AG04450 (cell line): ENCODE measurements at regions of chr5 and their contacts with region 1.

Region 1: DNA sequence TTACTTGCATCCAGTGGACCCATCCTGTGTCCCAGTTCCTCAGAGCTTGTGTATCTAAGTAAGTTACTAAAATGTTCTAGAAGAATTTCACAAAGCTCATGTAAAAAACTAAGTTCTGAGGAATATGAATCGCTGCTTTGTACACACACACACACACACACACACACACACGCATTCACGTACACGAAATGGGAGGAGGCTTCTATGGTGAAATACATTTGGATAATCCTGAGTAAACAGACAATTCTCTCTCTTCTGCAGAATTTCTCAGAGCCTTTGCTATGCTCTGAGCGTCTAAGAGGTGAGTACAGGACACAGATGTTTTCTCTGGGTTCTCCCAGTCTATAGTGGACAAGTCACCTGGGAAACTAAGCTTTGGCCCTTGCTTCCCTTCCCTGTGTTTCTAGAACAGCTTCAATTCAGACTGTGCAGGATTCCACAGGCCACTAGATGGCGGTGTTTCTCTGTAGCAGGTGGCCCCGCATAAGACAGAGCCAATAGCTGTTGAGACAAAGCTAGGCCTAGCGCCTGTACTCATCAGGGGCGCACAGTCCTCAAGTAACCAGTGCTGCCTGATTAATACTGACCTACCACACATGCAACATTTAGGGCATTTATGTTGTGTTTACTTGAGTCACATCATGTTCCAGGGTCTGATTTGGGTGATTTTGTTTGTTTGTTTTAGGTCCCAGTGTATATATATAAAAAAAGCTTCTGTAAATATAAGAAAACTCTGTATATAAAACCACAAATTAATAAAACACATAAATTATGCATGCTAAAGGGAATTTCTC is 114.8 kb downstream of the LIFR start:
- DNase-seq: peak; percentile 82
- H3K4me3 ChIP-seq: no peak overlapping the region
- H3K27ac ChIP-seq: no peak overlapping the region
- H3K27me3 ChIP-seq: peaks cover 2% of the 10 kb centered on the region
- CTCF ChIP-seq: peak; percentile 99

Region 2: GRCh38 chr5:38307845-38308244 is 133.8 kb before region 1 on chr5:
- CTCF ChIA-PET with region 1: no interaction called
- POLR2A ChIA-PET with region 1: no interaction called
- DNase-seq: no peak
- H3K4me3 ChIP-seq: no peak overlapping the region
- H3K27ac ChIP-seq: no peak overlapping the region
- H3K27me3 ChIP-seq: no peaks in the 10 kb centered on the region
- CTCF ChIP-seq: no peak

Region 3: GRCh38 chr5:38420691-38421390 is 20.8 kb before region 1 on chr5:
- CTCF ChIA-PET with region 1: interaction called, 55 read pairs
- POLR2A ChIA-PET with region 1: no interaction called
- DNase-seq: peak; percentile 29
- H3K4me3 ChIP-seq: no peak overlapping the region
- H3K27ac ChIP-seq: no peak overlapping the region
- H3K27me3 ChIP-seq: peaks cover 2% of the 10 kb centered on the region
- CTCF ChIP-seq: peak; percentile 86

Region 4: DNA sequence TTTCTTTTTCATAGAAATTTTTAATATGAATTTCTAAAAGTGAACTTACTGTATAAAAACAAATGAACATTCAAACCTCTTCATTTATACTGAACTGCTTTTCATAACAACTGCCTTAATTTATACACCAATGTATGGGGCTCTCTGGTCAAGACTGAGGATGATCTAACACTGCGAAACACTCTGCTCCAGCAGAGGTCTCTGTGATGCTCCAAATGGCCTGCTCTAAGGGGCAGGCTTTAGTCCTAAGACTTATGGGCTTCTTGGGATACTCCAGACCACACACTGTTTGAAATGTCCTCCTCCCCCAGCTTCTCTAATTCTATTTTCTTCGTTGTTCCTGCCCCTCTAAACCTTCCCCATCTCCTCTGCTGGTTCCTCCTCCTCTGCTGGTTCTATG is 56.3 kb after region 1 on chr5:
- CTCF ChIA-PET with region 1: interaction called, 14 read pairs
- POLR2A ChIA-PET with region 1: no interaction called
- DNase-seq: no peak
- H3K4me3 ChIP-seq: no peak overlapping the region
- H3K27ac ChIP-seq: no peak overlapping the region
- H3K27me3 ChIP-seq: no peaks in the 10 kb centered on the region
- CTCF ChIP-seq: 0 out of 2 replicates have a peak, but pooled peaks have one; percentile 8

Region 5: DNA sequence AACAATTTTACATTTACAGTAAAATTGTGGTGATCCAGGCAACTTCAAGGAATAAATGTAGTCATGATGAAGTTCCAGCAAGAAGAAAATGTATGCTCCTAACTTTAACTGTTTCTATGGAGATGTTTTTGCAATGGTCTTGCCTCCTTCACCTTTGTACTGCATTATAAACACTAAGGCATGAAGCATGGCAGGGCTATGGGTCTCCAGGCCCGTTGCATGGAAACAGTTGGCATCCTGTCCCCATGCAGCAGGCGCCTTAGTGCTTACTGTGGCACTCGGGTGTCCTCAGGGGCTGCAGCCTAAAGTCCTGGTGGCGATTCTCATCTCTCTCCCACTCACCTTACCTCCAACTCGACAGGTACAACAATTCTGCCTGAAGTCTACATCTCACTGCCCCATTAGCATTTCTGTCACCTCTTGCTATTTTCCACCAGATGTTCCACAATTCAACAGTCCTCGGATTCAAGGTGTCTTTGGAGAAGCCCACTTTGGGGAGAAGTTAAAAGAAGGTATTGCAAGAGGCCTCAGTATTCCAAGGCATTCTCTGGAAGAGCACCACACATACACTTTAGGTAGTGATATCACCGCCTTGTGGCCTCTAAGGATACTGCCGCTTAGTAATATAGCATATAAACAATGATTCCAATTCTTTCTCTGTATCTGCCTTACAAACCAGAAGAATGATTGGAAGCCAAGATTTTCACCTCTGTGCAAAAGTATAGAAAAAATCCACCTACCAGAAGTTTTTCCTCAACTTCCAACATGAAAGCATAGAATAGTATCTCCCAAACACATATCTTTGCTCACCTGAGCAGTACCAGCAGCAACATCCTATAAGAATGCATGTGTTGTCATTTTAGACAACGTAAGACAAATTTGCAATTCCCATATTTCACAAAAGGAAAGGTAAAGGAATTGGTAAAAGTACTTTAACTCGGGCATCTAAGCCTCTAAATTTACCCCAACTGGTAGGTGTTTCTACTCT is 109.7 kb after region 1 on chr5:
- CTCF ChIA-PET with region 1: interaction called, 38 read pairs
- POLR2A ChIA-PET with region 1: no interaction called
- DNase-seq: peak; percentile 27
- H3K4me3 ChIP-seq: no peak overlapping the region
- H3K27ac ChIP-seq: no peak overlapping the region
- H3K27me3 ChIP-seq: no peaks in the 10 kb centered on the region
- CTCF ChIP-seq: peak; percentile 81

Region 6: GRCh38 chr5:38639377-38640332 is 198.0 kb after region 1 on chr5:
- CTCF ChIA-PET with region 1: no interaction called
- POLR2A ChIA-PET with region 1: no interaction called
- DNase-seq: no peak
- H3K4me3 ChIP-seq: no peak overlapping the region
- H3K27ac ChIP-seq: no peak overlapping the region
- H3K27me3 ChIP-seq: peaks cover 27% of the 10 kb centered on the region
- CTCF ChIP-seq: no peak

Region 7: GRCh38 chr5:38755179-38755578 is 313.5 kb after region 1 on chr5:
- CTCF ChIA-PET with region 1: interaction called, 16 read pairs
- POLR2A ChIA-PET with region 1: no interaction called
- DNase-seq: peak; percentile 26
- H3K4me3 ChIP-seq: no peak overlapping the region
- H3K27ac ChIP-seq: no peak overlapping the region
- H3K27me3 ChIP-seq: no peaks in the 10 kb centered on the region
- CTCF ChIP-seq: peak; percentile 27; the same call in 1 of the 2 replicates

Region 8: DNA sequence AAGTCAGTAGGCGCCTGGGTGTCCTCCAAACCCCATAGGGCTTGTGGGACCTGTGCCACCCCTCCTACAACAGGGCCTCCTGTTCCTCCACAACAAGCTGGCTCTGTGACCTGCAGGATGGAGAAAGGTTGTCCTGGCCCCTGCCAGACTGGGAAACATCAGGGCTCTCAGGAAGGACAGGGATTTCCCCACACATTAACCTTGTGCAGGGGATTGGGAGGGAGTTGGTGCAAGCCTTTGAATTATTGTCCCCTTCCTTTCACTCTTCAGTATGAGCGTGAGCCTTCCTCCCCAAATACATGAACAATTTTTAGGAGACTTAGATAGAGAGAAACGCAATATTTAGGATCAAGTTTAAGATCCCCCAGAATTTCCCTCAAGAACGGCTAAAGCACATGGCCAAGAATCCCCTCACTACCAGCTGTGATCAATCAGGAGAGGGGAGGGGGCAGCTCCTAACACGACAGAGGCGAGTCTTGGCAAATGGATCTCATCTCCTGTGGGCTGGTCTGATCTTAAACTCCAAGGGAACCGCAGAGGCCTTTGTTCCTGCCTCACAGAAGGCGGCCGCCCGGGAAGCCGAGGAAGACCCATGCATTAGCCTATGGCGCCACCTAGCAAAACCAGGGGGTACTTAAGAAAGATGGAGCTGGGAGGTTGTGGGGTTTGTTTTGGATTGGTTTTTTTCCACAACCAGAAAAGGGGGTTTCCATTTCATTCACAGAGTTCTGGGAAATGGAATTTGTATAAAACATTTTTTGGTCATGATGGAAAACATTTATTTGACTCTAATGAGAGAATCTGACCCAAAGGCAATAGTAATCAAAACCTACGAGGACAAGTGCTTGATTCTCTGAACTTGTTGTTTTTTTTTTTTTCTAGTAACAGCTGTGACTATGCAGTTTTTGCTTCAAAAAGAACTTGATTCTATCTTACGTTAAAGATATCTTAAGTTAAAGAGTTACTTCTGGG is 368.0 kb after region 1 on chr5:
- CTCF ChIA-PET with region 1: interaction called, 364 read pairs
- POLR2A ChIA-PET with region 1: interaction called, 14 read pairs
- DNase-seq: peak; percentile 92
- H3K4me3 ChIP-seq: no peak overlapping the region
- H3K27ac ChIP-seq: peak overlapping the region; percentile 55
- H3K27me3 ChIP-seq: no peaks in the 10 kb centered on the region
- CTCF ChIP-seq: peak; percentile 90